Activated naive CD4-positive, alpha-beta T cell treated with anti-CD3 and anti-CD28 coated beads, Interleukin-2, amount 10 ng/mL, durations not matched to agents 7 days and 5 days (primary cell): ENCODE measurements at regions of chr14 and their contacts with region 1.

Region 1: GRCh38 chr14:37230551-37231194 is 32.9 kb downstream of the MIPOL1 start:
- DNase-seq: no peak
- H3K4me3 Mint-ChIP-seq: no peak overlapping the region
- H3K27ac Mint-ChIP-seq: no peak overlapping the region
- H3K4me1 Mint-ChIP-seq: no peaks in the 10 kb centered on the region
- H3K27me3 Mint-ChIP-seq: no peaks in the 10 kb centered on the region

Region 2: DNA sequence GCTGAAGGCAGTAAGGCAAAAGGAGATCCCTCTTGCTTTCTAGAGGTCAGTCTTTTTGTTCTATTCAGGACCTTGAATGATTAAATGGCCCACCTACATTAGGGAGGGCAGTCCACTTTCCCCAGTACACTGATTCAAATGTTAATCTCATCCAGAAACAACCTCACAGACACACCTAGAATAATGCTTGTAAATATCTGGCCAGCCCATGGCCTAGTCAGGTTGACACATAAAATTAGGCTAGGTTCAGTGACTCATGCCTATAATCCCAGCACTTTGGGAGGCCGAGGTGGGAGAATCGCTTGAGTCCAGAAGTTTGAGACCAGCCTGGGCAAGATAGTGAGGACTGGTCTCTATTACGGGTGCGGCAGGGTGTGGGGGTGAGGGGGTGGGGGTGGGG is 10.5 kb after region 1 on chr14:
- CTCF ChIA-PET with region 1: interaction called, 10 read pairs
- DNase-seq: no peak
- H3K4me3 Mint-ChIP-seq: no peak overlapping the region
- H3K27ac Mint-ChIP-seq: no peak overlapping the region
- H3K4me1 Mint-ChIP-seq: no peaks in the 10 kb centered on the region
- H3K27me3 Mint-ChIP-seq: no peaks in the 10 kb centered on the region